HepG2 (cell line): ENCODE measurements at regions of chr2 and their contacts with region 1.

Region 1: GRCh38 chr2:218781691-218782527 is at the start of gene CYP27A1:
- DNase-seq: peak; percentile 83
- ATAC-seq: peak; percentile 95
- H3K4me3 ChIP-seq: peak within 1 kb of the TSS; percentile 69 to 97 (median 94)
- H3K27ac ChIP-seq: peak within 1 kb of the TSS; percentile 97
- H3K4me1 ChIP-seq: peaks cover 56% of the 10 kb centered on the region
- H3K27me3 ChIP-seq: no peaks in the 10 kb centered on the region; a peak in 1 of 5 replicates
- CTCF ChIP-seq: no peak
- EP300 ChIP-seq: peak in 1 of 2 experiments; percentile 62; a peak in 2 of 4 replicates
- POLR2A ChIP-seq: peak; percentile 77 to 90
- RAD21 ChIP-seq: peak; percentile 73
- total RNA-seq, gene CYP27A1: 106 and 157 TPM in 2 replicates

Region 2: GRCh38 chr2:218631837-218632236 is 150.1 kb before region 1 on chr2:
- CTCF ChIA-PET with region 1: no interaction called
- POLR2A ChIA-PET with region 1: no interaction called
- in situ Hi-C with region 1: no loop called
- intact Hi-C with region 1: no loop called
- DNase-seq: no peak
- ATAC-seq: no peak
- H3K4me3 ChIP-seq: no peak overlapping the region
- H3K27ac ChIP-seq: no peak overlapping the region
- H3K4me1 ChIP-seq: no peaks in the 10 kb centered on the region
- H3K27me3 ChIP-seq: peaks cover 0 to 1% of the 10 kb centered on the region in 2 experiments; a peak in 1 of 5 replicates
- CTCF ChIP-seq: no peak
- EP300 ChIP-seq: no peak
- POLR2A ChIP-seq: no peak
- RAD21 ChIP-seq: no peak

Region 3: DNA sequence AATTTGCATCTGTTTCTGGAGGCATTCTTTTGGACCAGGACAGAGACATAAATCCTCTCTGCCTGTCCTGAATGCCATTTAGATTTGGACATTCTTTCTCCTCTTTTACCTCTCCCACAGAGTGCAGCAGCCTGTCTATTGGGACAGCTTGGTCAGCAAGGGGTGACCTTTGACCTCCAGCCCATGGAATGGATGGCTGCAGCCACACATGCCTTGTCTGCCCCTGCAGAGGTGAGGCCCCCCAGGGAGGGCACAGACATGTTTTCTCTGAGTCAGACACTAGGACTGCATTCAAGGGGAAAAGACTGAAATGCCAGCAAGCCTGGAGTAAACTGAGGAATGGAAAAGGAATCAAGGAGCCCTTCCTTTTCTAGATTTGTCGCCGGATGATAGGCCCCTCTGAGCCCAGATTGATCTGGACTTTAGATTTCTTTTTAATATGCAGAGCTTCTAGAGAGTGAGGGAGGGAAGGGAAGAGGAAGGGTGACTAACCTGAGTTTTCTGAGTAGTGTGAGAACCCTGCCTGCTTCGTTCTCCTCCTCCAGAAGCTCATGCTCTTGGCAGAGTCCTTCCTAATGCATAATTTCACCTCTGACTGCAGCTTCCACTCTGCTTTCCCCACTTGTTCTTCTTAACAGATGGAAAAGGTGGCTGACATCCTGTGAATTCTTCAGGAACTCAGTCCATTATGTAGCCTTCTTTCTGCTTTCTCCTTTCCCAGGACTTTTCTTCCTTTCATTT is 87.3 kb before region 1 on chr2:
- CTCF ChIA-PET with region 1: no interaction called
- POLR2A ChIA-PET with region 1: no interaction called
- in situ Hi-C with region 1: no loop called
- intact Hi-C with region 1: no loop called
- DNase-seq: no peak
- ATAC-seq: peak; percentile 69
- H3K4me3 ChIP-seq: no peak overlapping the region
- H3K27ac ChIP-seq: no peak overlapping the region
- H3K4me1 ChIP-seq: peaks cover 9% of the 10 kb centered on the region
- H3K27me3 ChIP-seq: no peaks in the 10 kb centered on the region
- CTCF ChIP-seq: no peak
- EP300 ChIP-seq: no peak
- POLR2A ChIP-seq: no peak
- RAD21 ChIP-seq: no peak

Region 4: DNA sequence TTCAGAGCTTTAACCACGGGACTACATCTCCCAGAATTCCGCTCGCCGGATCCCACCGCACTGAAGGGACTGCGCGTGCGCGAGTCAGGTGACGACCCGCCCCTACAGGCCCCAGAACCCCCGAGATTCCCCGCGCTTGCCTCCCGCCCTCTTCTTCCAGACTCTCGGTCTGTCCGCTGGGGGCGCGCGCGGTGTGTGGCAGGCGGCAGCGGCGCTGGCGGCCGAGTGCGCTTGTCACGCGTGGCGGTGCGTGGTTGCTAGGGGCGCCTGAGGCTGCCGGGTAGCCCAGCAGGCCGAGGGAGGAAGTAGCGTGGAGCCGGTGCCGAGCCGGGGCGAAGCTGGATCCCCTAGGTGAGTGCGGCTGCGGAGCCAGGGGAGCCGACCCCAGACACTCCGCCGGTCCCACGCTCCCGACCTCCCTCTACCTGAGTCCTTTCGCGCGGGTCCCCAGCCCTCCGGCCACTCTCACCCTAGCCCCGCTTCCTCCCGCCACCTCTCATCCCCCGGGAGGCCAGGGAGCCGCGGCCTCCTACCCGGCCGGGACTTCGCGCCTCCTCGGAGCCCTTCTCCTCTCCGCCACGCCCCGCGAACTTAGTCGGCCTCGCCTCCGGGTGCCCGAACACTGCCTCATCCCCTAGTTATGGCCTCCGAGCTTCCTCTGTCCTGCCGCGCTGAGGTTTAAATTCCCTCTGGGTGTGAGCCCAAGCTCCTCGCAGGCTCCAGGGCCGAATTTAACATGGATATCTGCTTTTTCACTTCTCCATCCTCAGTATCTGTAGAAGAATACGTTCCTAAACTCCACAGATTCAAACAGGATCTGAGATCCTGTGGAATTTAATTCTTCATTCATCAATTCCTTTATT is 71.0 kb before region 1 on chr2 and contains the start of gene TTLL4:
- CTCF ChIA-PET with region 1: no interaction called
- POLR2A ChIA-PET with region 1: interaction called, 19 read pairs
- in situ Hi-C with region 1: no loop called
- intact Hi-C with region 1: loop called (anchors 2 kb)
- DNase-seq: peak; percentile 95
- ATAC-seq: peak; percentile 95
- H3K4me3 ChIP-seq: peak within 1 kb of the TSS; percentile 88 to 97 (median 93)
- H3K27ac ChIP-seq: peak within 1 kb of the TSS; percentile 74
- H3K4me1 ChIP-seq: peaks cover 42% of the 10 kb centered on the region
- H3K27me3 ChIP-seq: no peaks in the 10 kb centered on the region; a peak in 1 of 5 replicates
- CTCF ChIP-seq: peak; percentile 98
- EP300 ChIP-seq: peak in 1 of 2 experiments; percentile 29; a peak in 1 of 4 replicates
- POLR2A ChIP-seq: peak; percentile 79 to 94
- RAD21 ChIP-seq: peak; percentile 84
- total RNA-seq, gene TTLL4: 77.5 and 78.0 TPM in 2 replicates

Region 5: DNA sequence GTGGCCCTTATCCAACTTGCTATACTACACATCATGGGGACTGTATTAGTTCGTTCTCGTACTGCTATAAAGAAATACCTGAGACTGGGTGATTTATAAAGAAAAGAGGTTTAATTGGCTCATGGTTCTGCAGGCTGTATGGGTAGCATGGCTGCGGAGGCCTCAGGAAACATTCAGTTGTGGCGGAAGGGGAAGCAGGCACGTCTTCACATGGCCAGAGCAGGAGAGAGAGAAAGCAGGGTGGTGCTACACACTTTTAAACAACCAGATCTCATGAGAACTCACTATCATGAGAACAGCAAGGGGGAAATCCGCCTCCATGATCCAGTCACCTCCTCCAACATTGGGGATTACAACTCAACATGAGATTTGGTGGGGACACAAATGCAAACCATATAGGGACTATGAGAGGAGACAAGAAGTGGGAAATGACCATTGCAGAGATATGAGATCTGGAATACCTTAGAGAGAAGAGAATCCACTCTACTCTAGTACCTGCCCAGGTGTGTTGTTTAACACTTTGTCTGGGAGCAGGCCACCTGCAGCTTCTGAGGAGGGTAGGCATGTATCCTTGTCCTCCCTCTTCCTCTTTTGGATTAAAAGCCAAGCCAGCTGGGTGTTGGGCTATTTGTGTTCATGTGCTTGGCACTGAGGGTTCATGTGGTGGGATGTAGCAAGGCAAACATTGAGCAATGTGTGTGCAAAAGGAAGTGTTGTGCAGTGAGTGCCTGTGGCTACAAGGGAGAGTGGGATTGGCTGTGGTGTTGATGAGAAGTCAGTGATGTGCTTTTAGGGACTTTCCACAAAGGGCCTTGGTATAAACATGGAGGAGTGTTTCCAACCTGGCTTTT is 48.5 kb before region 1 on chr2:
- CTCF ChIA-PET with region 1: no interaction called
- POLR2A ChIA-PET with region 1: interaction called, 90 read pairs
- in situ Hi-C with region 1: no loop called
- intact Hi-C with region 1: loop called (anchors 1 kb)
- DNase-seq: peak; percentile 84
- ATAC-seq: peak; percentile 35
- H3K4me3 ChIP-seq: peak overlapping the region in 1 of 3 experiments; percentile 0; a peak in 1 of 6 replicates
- H3K27ac ChIP-seq: peak overlapping the region; percentile 76
- H3K4me1 ChIP-seq: peaks cover 47% of the 10 kb centered on the region
- H3K27me3 ChIP-seq: no peaks in the 10 kb centered on the region
- CTCF ChIP-seq: peak; percentile 23; the same call in 1 of the 2 replicates
- EP300 ChIP-seq: peak in 1 of 2 experiments; percentile 93; a peak in 2 of 4 replicates
- POLR2A ChIP-seq: no peak
- RAD21 ChIP-seq: no peak

Region 6: GRCh38 chr2:218754201-218754600 is 27.7 kb before region 1 on chr2:
- CTCF ChIA-PET with region 1: no interaction called
- POLR2A ChIA-PET with region 1: interaction called, 218 read pairs
- in situ Hi-C with region 1: no loop called
- intact Hi-C with region 1: loop called (anchors 1 kb)
- DNase-seq: no peak
- ATAC-seq: no peak
- H3K4me3 ChIP-seq: no peak overlapping the region
- H3K27ac ChIP-seq: peak overlapping the region; percentile 96
- H3K4me1 ChIP-seq: peaks cover 95% of the 10 kb centered on the region
- H3K27me3 ChIP-seq: no peaks in the 10 kb centered on the region
- CTCF ChIP-seq: no peak
- EP300 ChIP-seq: no peak
- POLR2A ChIP-seq: no peak
- RAD21 ChIP-seq: no peak

Region 7: DNA sequence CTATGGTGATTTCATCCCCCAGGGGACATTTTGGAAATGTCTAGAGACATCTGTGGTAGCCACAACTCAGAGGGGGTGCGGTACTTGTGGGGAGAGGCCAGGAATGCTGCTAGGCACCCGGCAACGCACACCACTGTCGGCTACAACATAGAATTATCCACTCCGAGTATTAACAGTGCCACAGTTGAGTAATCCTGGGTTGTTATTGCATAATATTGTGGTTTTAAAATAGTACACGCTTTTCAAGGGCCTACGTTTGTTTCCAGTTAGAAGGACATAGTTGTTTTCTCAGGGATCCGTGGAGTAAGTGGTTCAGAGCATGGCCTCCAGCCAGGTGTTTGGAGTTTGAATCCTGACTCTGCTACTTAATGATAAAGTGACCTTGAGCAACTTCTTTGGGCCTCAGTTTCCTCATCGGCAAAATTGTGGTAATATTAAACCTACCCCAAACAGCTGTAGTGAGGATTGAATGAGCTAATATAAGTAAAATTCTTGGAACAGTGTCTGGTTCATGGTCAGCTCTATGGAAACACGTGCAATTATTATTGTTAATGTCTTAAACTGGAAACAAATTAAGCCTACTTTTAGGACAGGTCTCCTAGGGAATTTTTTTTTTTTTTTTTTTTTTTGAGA is 24.6 kb after region 1 on chr2:
- CTCF ChIA-PET with region 1: no interaction called
- POLR2A ChIA-PET with region 1: interaction called, 13 read pairs
- in situ Hi-C with region 1: no loop called
- intact Hi-C with region 1: loop called (anchors 2 kb)
- DNase-seq: peak; percentile 91
- ATAC-seq: peak; percentile 81
- H3K4me3 ChIP-seq: peak overlapping the region in 2 of 3 experiments; percentile 38 to 40; a peak in 4 of 6 replicates
- H3K27ac ChIP-seq: peak overlapping the region; percentile 54
- H3K4me1 ChIP-seq: peaks cover 32% of the 10 kb centered on the region
- H3K27me3 ChIP-seq: no peaks in the 10 kb centered on the region
- CTCF ChIP-seq: no peak
- EP300 ChIP-seq: peak; percentile 86 to 98
- POLR2A ChIP-seq: no peak
- RAD21 ChIP-seq: no peak